ENCODE measurements at regions of chr19 and their contacts with region 1.

Region 1: DNA sequence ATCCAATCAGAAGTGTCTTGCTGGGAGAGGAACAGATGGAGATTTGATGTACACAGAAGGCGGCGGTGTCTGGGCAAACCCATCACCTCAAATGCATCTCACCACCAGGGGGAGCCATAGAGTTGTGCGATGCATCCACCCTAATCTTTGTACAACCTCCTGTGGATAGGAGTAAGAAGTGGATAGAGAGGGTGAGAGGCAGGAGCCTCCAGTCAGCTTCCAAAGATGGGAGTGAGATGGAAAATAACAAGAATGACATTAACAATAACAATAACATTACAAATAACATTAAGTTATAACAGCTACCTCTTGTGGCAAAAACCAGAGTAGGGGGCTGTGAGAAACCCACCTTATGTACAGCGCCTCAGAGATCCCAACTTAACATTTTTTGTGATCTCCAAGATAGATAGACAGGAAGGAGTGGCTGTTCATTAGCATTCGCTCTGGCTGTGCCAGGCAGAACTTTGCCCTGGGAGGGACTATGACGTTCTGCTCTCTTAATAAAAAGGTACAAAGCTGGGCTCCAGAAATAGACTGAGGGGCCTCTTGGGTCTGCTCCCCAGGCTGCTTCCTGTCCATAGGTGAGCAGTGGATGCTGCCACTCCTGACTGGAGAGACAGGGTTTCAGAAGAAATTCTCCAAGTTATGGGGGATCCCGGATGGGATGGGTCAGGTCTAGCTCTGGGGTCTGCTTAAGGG is 5.2 kb upstream of the CEACAM18 start:
- DNase-seq: peak; percentile 67
- H3K4me3 Mint-ChIP-seq: no peak overlapping the region
- H3K27ac Mint-ChIP-seq: peak overlapping the region; percentile 29
- H3K4me1 Mint-ChIP-seq: peaks cover 37% of the 10 kb centered on the region
- H3K27me3 Mint-ChIP-seq: no peaks in the 10 kb centered on the region

Region 2: GRCh38 chr19:51514866-51515481 is 41.8 kb after region 1 on chr19:
- intact Hi-C with region 1: loop called (anchors 1 kb)
- DNase-seq: no peak
- H3K4me3 Mint-ChIP-seq: no peak overlapping the region
- H3K27ac Mint-ChIP-seq: no peak overlapping the region
- H3K4me1 Mint-ChIP-seq: peaks cover 22% of the 10 kb centered on the region
- H3K27me3 Mint-ChIP-seq: peaks cover under 1% of the 10 kb centered on the region

Region 3: GRCh38 chr19:51564791-51565190 is 91.6 kb after region 1 on chr19:
- intact Hi-C with region 1: no loop called
- DNase-seq: no peak
- H3K4me3 Mint-ChIP-seq: no peak overlapping the region
- H3K27ac Mint-ChIP-seq: no peak overlapping the region
- H3K4me1 Mint-ChIP-seq: peaks cover 8% of the 10 kb centered on the region
- H3K27me3 Mint-ChIP-seq: peaks cover 39% of the 10 kb centered on the region

Region 4: DNA sequence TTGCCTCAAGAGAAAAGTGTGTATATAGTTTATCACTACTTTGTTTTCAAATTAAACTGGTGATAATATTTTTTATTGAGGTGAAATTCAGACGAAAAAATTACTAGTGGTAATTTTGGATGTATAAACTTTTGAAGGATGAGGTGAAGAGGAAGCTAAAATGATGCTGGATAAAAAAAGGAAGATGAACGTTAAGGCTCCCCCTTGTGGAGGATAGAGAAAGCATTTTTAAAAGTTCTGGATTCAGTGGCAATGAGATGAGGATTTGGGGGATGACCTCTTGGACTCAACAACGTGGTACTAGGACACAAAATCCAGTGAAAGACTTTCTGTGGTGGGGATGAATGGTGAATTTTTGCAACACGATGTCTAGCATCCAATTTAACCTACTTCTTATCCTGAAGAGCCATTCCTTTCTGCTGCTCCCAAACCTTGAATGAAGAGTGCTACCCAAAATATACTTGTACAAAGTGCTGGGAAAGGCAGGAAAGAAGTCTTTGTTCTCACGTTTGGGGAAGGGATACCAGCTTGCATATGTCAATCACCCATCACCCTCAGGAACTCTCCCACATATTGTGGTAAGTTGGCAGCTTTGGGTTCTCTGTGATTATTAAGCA is 164.3 kb after region 1 on chr19:
- intact Hi-C with region 1: loop called (anchors 1 kb)
- DNase-seq: no peak
- H3K4me3 Mint-ChIP-seq: no peak overlapping the region
- H3K27ac Mint-ChIP-seq: no peak overlapping the region
- H3K4me1 Mint-ChIP-seq: no peaks in the 10 kb centered on the region
- H3K27me3 Mint-ChIP-seq: peaks cover 39% of the 10 kb centered on the region